ENCODE measurements at regions of chr10 and their contacts with region 1.

Region 1: GRCh38 chr10:76303682-76304316 is 872.4 kb downstream of the LRMDA start:
- DNase-seq: peak; percentile 54
- ATAC-seq: peak; percentile 26
- H3K4me3 Mint-ChIP-seq: no peak overlapping the region
- H3K27ac Mint-ChIP-seq: no peak overlapping the region
- H3K4me1 Mint-ChIP-seq: no peaks in the 10 kb centered on the region
- H3K27me3 Mint-ChIP-seq: no peaks in the 10 kb centered on the region

Region 2: GRCh38 chr10:76036111-76036940 is 267.5 kb before region 1 on chr10:
- CTCF ChIA-PET with region 1: no interaction called
- POLR2A ChIA-PET with region 1: no interaction called
- intact Hi-C with region 1: loop called in 1 of 2 experiments (anchors 10 kb)
- DNase-seq: peak; percentile 73
- ATAC-seq: peak; percentile 55
- H3K4me3 Mint-ChIP-seq: no peak overlapping the region
- H3K27ac Mint-ChIP-seq: no peak overlapping the region
- H3K4me1 Mint-ChIP-seq: no peaks in the 10 kb centered on the region
- H3K27me3 Mint-ChIP-seq: peaks cover 3% of the 10 kb centered on the region

Region 3: DNA sequence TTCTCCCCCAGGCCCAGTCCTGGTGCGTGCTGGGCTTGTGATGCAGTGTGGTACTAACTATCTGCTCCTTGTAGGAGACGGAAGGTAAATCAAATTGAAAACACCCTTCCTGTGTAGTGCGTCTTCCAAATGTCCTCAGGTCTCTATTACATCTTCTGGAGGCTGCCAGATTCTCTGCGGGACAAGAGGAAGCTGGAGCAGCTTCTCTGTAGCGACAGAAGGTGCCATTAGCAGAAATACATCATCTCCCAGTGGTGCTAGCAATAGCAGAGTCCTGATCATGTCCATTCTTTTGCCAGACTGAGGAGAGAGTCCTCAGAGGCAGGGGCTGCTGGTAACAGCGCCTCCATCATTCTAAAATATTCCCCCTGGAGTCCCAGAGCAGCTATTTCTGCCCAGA is 197.2 kb before region 1 on chr10:
- CTCF ChIA-PET with region 1: no interaction called
- POLR2A ChIA-PET with region 1: no interaction called
- intact Hi-C with region 1: loop called in 1 of 2 experiments (anchors 10 kb)
- DNase-seq: no peak
- ATAC-seq: no peak
- H3K4me3 Mint-ChIP-seq: no peak overlapping the region
- H3K27ac Mint-ChIP-seq: no peak overlapping the region
- H3K4me1 Mint-ChIP-seq: no peaks in the 10 kb centered on the region
- H3K27me3 Mint-ChIP-seq: no peaks in the 10 kb centered on the region

Region 4: DNA sequence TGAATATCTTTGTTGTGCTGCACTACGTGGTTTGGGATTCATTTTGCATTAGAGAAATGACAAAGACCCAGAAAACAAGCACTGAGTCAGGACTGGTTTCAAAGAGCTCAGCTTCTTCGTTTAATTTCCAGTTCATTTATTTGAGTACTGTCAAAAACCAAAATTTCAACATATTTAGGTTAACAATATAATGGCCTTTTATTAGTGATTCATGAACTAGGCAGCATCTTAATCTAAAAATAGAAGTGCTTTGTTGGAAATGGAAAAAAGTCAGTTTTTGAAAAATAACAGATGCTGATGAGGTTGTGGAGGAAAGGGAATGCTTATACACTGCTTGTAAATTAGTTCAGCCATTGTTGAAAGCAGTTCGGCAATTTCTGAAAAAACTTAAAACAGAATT is 15.9 kb before region 1 on chr10:
- CTCF ChIA-PET with region 1: no interaction called
- POLR2A ChIA-PET with region 1: no interaction called
- intact Hi-C with region 1: no loop called
- DNase-seq: no peak
- ATAC-seq: no peak
- H3K4me3 Mint-ChIP-seq: no peak overlapping the region
- H3K27ac Mint-ChIP-seq: no peak overlapping the region
- H3K4me1 Mint-ChIP-seq: no peaks in the 10 kb centered on the region
- H3K27me3 Mint-ChIP-seq: peaks cover 2% of the 10 kb centered on the region

Measured in activated CD4-positive, alpha-beta T cell treated with anti-CD3 and anti-CD28 coated beads for 36 hours (primary cell).